Caco-2 (cell line): ENCODE measurements at regions of chr10 and their contacts with region 1.

Region 1: GRCh38 chr10:62816331-62817120 is at the start of gene EGR2:
- DNase-seq: peak; percentile 96 to 97
- H3K4me3 ChIP-seq: peak within 1 kb of the TSS; percentile 55
- H3K4me3 Mint-ChIP-seq: peak within 1 kb of the TSS; percentile 87
- H3K27ac Mint-ChIP-seq: peak within 1 kb of the TSS; percentile 74
- H3K4me1 ChIP-seq: peaks cover 17% of the 10 kb centered on the region
- H3K4me1 Mint-ChIP-seq: peaks cover 20% of the 10 kb centered on the region
- H3K27me3 ChIP-seq: peaks cover 16% of the 10 kb centered on the region
- H3K27me3 Mint-ChIP-seq: peaks cover 40% of the 10 kb centered on the region
- CTCF ChIP-seq: no peak
- total RNA-seq, gene EGR2: 0.30 and 0.61 TPM in 2 replicates

Region 2: DNA sequence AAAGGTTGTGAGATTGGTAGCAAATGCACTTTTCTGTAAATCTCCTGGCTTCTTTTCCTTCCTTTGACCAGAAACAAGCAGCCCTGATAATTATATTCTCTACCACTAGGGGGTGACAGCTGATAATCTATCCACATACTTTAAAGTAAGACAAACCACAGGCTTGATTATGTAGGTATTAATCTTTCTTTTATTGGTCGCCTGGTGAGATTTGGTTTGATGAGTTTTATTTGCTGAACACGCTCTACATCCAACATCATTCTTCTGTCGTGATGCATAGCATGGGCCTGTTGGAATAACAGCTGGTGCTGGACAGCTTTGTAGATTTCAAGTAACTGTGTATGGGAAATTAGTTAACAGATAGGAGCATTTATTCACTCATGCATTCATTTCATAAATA is 378.8 kb before region 1 on chr10:
- CTCF ChIA-PET with region 1: no interaction called
- POLR2A ChIA-PET with region 1: no interaction called
- intact Hi-C with region 1: loop called (anchors 1 kb)
- DNase-seq: peak in 1 of 2 experiments; percentile 79
- H3K4me3 ChIP-seq: no peak overlapping the region
- H3K4me3 Mint-ChIP-seq: no peak overlapping the region
- H3K27ac Mint-ChIP-seq: no peak overlapping the region
- H3K4me1 ChIP-seq: no peaks in the 10 kb centered on the region
- H3K4me1 Mint-ChIP-seq: no peaks in the 10 kb centered on the region
- H3K27me3 ChIP-seq: no peaks in the 10 kb centered on the region
- H3K27me3 Mint-ChIP-seq: peaks cover 21% of the 10 kb centered on the region
- CTCF ChIP-seq: peak; percentile 85

Region 3: GRCh38 chr10:62511656-62512055 is 304.9 kb before region 1 on chr10:
- CTCF ChIA-PET with region 1: no interaction called
- POLR2A ChIA-PET with region 1: no interaction called
- intact Hi-C with region 1: no loop called
- DNase-seq: no peak
- H3K4me3 ChIP-seq: no peak overlapping the region
- H3K4me3 Mint-ChIP-seq: no peak overlapping the region
- H3K27ac Mint-ChIP-seq: no peak overlapping the region
- H3K4me1 ChIP-seq: peaks cover 9% of the 10 kb centered on the region
- H3K4me1 Mint-ChIP-seq: peaks cover 8% of the 10 kb centered on the region
- H3K27me3 ChIP-seq: no peaks in the 10 kb centered on the region
- H3K27me3 Mint-ChIP-seq: peaks cover 5% of the 10 kb centered on the region
- CTCF ChIP-seq: no peak

Region 4: GRCh38 chr10:62610649-62611229 is 205.8 kb before region 1 on chr10:
- CTCF ChIA-PET with region 1: interaction called, 38 read pairs
- POLR2A ChIA-PET with region 1: no interaction called
- intact Hi-C with region 1: loop called (anchors 1 kb)
- DNase-seq: peak; percentile 79 to 85
- H3K4me3 ChIP-seq: no peak overlapping the region
- H3K4me3 Mint-ChIP-seq: peak overlapping the region; percentile 6
- H3K27ac Mint-ChIP-seq: no peak overlapping the region
- H3K4me1 ChIP-seq: no peaks in the 10 kb centered on the region
- H3K4me1 Mint-ChIP-seq: no peaks in the 10 kb centered on the region
- H3K27me3 ChIP-seq: no peaks in the 10 kb centered on the region
- H3K27me3 Mint-ChIP-seq: peaks cover 18% of the 10 kb centered on the region
- CTCF ChIP-seq: peak; percentile 92 to 93

Region 5: DNA sequence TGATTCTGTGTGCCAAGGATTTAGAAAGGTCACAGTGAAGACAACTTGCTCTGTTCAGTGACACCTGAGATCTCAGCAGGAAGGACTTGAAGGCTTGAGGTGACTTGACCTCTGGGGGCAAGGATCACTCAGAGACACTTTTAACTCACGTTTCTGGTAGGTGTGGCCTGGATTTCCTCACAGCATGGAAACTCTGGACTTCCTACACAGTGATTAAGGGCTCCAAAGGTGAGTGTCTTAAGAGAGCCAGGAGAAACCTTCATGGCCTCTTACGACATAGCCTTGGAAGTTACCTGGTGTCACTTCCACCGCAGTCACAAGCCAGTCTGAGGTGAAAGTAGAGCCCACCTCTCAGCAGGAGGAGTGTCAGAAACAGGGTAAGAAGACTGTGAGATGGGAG is 50.1 kb before region 1 on chr10:
- CTCF ChIA-PET with region 1: no interaction called
- POLR2A ChIA-PET with region 1: no interaction called
- intact Hi-C with region 1: loop called (anchors 1 kb)
- DNase-seq: peak; percentile 70 to 89
- H3K4me3 ChIP-seq: no peak overlapping the region
- H3K4me3 Mint-ChIP-seq: peak overlapping the region; percentile 2
- H3K27ac Mint-ChIP-seq: peak overlapping the region; percentile 30
- H3K4me1 ChIP-seq: peaks cover 22% of the 10 kb centered on the region
- H3K4me1 Mint-ChIP-seq: peaks cover 23% of the 10 kb centered on the region
- H3K27me3 ChIP-seq: no peaks in the 10 kb centered on the region
- H3K27me3 Mint-ChIP-seq: no peaks in the 10 kb centered on the region
- CTCF ChIP-seq: no peak

Region 6: DNA sequence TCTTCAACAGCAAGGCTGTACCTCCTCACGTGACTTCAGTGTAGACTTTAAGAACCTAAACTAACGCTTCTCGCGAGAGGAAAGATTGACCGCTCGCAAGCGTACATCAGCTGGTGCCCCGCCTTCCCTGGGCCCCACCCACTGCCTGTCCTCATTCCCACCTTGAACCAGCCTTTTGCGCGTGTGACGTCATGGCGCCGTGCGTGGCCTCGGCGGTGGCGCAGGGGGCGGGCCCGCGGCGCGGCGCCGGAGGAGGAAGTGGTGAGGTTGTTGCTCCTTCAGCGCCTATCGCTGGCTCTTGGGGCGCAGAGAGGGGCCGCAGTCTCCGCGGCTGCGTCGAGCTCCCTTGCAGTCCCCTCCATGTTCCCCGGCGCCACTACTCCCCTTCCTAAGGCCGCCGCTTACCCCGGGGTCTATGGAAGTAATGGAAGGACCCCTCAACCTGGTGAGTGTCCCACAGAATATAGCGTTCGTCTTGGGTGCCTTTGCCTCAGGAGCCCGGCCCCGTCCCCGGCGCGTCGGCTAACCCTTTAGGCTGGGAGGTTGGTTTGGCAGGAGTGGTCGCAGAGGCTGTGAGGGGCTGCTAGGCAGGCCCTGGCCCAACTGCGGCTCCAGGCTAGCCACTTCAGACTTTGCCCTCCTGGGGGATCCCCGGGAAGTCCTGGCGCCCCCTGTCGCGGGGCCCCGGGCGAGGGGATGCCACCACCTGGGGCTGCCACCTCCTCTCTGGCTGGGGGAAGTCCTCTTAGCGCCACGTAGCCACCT is 316.7 kb after region 1 on chr10 and contains the start of gene NRBF2:
- CTCF ChIA-PET with region 1: interaction called, 3 read pairs
- POLR2A ChIA-PET with region 1: interaction called, 5 read pairs
- intact Hi-C with region 1: loop called (anchors 1 kb)
- DNase-seq: peak; percentile 100
- H3K4me3 ChIP-seq: peak within 1 kb of the TSS; percentile 60
- H3K4me3 Mint-ChIP-seq: peak within 1 kb of the TSS; percentile 94
- H3K27ac Mint-ChIP-seq: peak within 1 kb of the TSS; percentile 91
- H3K4me1 ChIP-seq: peaks cover 14% of the 10 kb centered on the region
- H3K4me1 Mint-ChIP-seq: peaks cover 35% of the 10 kb centered on the region
- H3K27me3 ChIP-seq: no peaks in the 10 kb centered on the region
- H3K27me3 Mint-ChIP-seq: no peaks in the 10 kb centered on the region
- CTCF ChIP-seq: peak; percentile 32 to 71
- total RNA-seq, gene NRBF2: 49.1 and 52.5 TPM in 2 replicates